ENCODE measurements at regions of chr14 and their contacts with region 1.

Region 1: DNA sequence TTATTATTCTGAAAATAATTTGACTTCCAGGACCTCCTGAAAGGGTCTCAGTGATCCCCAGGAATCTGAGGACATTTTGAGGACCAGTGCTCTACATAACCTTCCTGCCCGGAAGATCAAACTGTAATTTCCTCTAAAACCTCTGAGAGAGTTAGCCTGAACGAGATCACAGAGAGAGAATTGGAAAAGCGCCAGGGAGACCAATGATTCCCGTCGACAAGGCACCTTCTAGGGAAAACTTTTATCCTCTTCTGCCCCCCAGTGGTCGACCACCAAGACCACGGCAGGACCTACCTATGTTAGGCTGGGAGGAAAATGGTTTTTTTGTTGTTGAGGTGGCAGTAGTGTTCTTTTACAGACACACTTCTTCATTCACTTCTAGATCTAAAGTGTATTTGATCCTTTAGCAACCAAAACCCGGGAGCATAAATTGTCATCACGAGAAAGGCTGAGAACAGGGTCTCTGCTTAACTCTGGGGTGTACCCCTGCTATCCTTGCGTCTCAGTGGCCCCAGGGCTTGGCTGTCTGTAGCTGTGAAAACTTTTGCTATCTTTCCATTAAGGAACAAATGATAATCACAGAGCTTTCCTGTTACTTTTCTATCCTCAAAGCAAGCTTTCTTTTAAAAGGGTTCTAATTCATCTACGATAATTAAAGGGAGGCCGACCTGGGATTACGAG is 62.9 kb upstream of the NID2 start:
- DNase-seq: peak; percentile 54 to 96
- ATAC-seq: peak; percentile 91 to 98 (median 96)
- H3K4me3 ChIP-seq: no peak overlapping the region
- H3K27ac ChIP-seq: peak overlapping the region in 4 of 10 donors; percentile 8 to 35 (median 30)
- H3K4me1 ChIP-seq: peaks cover 0 to 24% (median 7%) of the 10 kb centered on the region in 9 donors
- H3K27me3 ChIP-seq: no peaks in the 10 kb centered on the region
- CTCF ChIP-seq: peak; percentile 59 to 92 (median 82)

Region 2: DNA sequence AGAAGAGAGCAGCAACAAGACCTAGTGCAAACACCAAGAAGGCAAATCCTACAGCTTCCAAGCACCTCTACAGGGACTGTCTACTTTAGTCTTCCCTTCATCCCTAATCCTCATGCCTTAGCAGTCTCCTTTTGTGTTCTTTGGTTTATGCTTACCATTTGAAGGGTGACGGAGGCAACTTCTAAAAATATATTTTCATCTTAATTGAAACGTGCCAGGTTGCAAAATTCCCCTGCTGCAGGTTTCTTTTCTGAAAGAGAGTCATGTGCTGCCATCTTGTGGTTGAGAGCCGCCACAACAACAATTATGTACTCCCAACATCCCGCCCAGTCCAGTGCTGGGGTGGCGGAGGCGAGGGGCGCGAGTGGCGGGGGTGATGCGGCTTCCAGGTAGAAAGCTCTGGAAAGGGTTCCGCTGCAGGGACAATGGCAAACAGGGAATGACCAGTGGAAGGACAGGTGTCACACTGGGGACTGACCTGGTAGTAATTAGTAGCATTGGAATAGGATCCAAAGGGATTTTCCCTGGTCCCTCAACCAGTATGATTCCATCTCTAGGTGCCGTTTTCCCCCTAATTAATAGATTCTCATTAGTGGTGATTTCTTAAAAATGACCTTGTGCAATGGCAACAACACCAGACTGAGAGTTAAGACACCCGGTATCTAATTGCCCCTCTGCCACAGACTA is 351.6 kb before region 1 on chr14:
- intact Hi-C with region 1: loop called in 3 of 10 experiments (anchors 2 to 10 kb)
- DNase-seq: peak; percentile 37 to 69
- ATAC-seq: peak; percentile 54 to 81 (median 68)
- H3K4me3 ChIP-seq: no peak overlapping the region
- H3K27ac ChIP-seq: no peak overlapping the region
- H3K4me1 ChIP-seq: peaks cover 0 to 19% (median 7%) of the 10 kb centered on the region in 9 donors
- H3K27me3 ChIP-seq: peaks cover 0 to 6% (median 0%) of the 10 kb centered on the region in 7 donors
- CTCF ChIP-seq: peak; percentile 74 to 89 (median 87)

Region 3: DNA sequence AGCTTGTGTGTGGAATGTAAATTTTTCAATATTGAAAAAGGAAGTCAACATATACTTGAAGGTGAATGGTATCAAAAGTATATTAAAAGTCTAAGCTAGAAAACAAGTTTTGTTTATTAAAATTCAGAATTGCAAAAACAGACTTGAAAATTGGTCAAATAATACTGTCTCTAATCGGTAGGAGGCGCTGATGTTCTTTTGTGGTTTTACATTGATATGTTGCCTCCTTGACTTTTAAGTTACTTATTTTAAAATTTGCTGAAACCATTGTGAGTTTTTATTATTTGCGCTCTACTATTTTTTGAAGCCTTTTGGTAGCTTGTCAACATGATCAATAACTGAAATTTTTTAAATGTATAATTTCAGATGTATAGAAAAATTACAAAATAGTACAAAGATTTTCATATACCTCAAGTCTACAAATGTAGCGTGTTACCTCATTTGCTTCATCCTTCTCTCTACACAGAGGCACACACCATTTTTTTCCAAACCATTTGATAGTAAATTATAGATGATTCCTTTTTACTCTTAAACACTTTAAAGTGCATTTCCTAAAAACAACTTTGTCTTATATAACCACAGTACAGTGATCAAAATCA is 135.5 kb before region 1 on chr14:
- intact Hi-C with region 1: loop called (anchors 1 to 5 kb)
- DNase-seq: peak in 1 of 2 donors; percentile 39
- ATAC-seq: no peak
- H3K4me3 ChIP-seq: no peak overlapping the region
- H3K27ac ChIP-seq: peak overlapping the region in 2 of 10 donors; percentile 5 to 15
- H3K4me1 ChIP-seq: peaks cover 0 to 72% (median 56%) of the 10 kb centered on the region in 9 donors
- H3K27me3 ChIP-seq: no peaks in the 10 kb centered on the region
- CTCF ChIP-seq: peak; percentile 63 to 94 (median 84)

Region 4: DNA sequence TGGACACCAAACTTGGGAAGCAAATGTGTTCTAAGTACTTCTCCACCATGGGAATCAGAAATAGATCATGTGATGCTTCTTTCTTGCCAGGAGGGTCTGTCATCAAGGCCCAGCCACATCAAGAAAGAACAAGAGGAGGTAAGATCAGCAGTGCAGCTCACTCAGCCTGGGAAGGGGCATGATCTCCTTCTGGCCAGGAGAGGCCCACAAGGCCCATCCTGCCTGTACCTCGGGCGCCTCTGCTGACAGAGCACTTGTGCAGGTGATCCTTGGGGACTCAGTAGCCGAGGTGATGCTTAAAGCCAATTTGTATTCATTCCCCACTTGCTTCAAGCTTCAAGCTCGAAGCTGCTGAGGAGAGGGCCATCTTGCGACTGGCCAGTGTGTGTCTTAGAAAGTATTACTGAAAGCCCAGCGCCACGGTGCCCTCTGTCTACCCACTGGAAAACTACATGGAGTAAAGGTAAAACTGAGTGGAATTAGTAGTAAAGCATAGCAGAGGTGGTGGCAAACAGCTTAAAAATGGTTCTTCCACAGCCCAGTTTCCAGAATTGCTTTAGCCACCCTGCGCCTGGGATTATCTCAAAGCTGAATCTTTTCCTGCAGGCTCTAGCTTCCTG is 116.3 kb before region 1 on chr14:
- intact Hi-C with region 1: loop called in 1 of 10 experiments (anchors 5 kb)
- DNase-seq: peak in 1 of 2 donors; percentile 46
- ATAC-seq: peak in 7 of 8 donors; percentile 18 to 63 (median 51)
- H3K4me3 ChIP-seq: peak overlapping the region in 1 of 10 donors; percentile 12
- H3K27ac ChIP-seq: peak overlapping the region; percentile 65 to 85 (median 74)
- H3K4me1 ChIP-seq: peaks cover 13 to 100% (median 90%) of the 10 kb centered on the region in 9 donors
- H3K27me3 ChIP-seq: no peaks in the 10 kb centered on the region
- CTCF ChIP-seq: peak; percentile 17 to 70 (median 45)

Region 5: GRCh38 chr14:52076334-52076733 is 55.4 kb before region 1 on chr14:
- intact Hi-C with region 1: loop called in 3 of 10 experiments (anchors 5 kb)
- DNase-seq: peak in 1 of 2 donors; percentile 21
- ATAC-seq: peak in 6 of 8 donors; percentile 15 to 75 (median 38)
- H3K4me3 ChIP-seq: no peak overlapping the region
- H3K27ac ChIP-seq: no peak overlapping the region
- H3K4me1 ChIP-seq: peaks cover 0 to 71% (median 34%) of the 10 kb centered on the region in 9 donors
- H3K27me3 ChIP-seq: peaks cover 0 to 7% (median 0%) of the 10 kb centered on the region in 7 donors
- CTCF ChIP-seq: no peak

Region 6: GRCh38 chr14:52154992-52155650 is 23.3 kb after region 1 on chr14:
- intact Hi-C with region 1: no loop called
- DNase-seq: no peak
- ATAC-seq: no peak
- H3K4me3 ChIP-seq: no peak overlapping the region
- H3K27ac ChIP-seq: peak overlapping the region in 1 of 10 donors; percentile 21
- H3K4me1 ChIP-seq: no peaks in the 10 kb centered on the region
- H3K27me3 ChIP-seq: no peaks in the 10 kb centered on the region
- CTCF ChIP-seq: no peak